ENCODE measurements at regions of chr4 and their contacts with region 1.

Region 1: GRCh38 chr4:75666299-75666698 is 6.9 kb downstream of the G3BP2 start:
- DNase-seq: no peak
- ATAC-seq: no peak
- H3K4me3 ChIP-seq: peak overlapping the region; percentile 15; the same call in 1 of the 2 replicates
- H3K27ac ChIP-seq: no peak overlapping the region
- H3K4me1 ChIP-seq: no peaks in the 10 kb centered on the region; the same call in 1 of the 2 replicates
- H3K27me3 ChIP-seq: no peaks in the 10 kb centered on the region
- CTCF ChIP-seq: no peak
- EP300 ChIP-seq: no peak
- POLR2A ChIP-seq: no peak
- RAD21 ChIP-seq: no peak

Region 2: DNA sequence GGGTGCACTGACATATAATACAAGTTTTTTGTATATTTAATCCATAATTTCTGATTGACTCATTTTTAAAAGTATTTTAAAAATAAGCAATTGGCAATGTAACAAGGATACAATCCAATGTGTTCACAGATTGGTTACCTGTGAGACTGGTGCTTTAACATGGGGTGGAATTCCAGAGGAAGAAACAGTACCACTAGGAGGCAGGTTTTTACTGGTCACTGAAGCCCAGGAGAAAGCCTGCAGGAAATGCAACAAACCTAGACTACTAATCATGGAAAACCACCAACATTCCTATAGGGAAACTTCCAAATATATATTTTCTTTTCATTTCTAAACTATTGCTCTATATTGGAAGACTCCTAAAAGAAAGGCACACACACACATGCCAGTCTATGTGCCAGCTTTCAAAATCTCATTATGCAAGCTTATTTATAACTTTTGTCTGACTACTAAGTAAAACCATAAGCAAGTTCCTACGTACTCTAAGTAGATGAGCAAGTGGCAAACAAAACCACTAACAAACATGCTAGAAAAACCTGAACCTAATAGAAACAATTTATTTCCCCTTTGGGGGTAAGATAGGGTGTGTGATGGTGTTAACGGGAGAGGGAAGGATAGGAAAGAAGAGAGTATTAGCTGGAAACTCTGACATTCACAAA is 12.3 kb before region 1 on chr4:
- CTCF ChIA-PET with region 1: interaction called, 28 read pairs
- POLR2A ChIA-PET with region 1: interaction called, 4 read pairs
- RAD21 ChIA-PET with region 1: no interaction called
- SMC1A ChIA-PET with region 1: interaction called, 13 read pairs
- in situ Hi-C with region 1: no loop called
- intact Hi-C with region 1: no loop called
- DNase-seq: no peak
- ATAC-seq: peak; percentile 37; the same call in 1 of the 3 replicates
- H3K4me3 ChIP-seq: no peak overlapping the region
- H3K27ac ChIP-seq: no peak overlapping the region
- H3K4me1 ChIP-seq: peaks cover 7% of the 10 kb centered on the region; the same call in 1 of the 2 replicates
- H3K27me3 ChIP-seq: no peaks in the 10 kb centered on the region
- CTCF ChIP-seq: peak; percentile 17 to 41 (median 24); a peak in 2 of 6 replicates
- EP300 ChIP-seq: no peak
- POLR2A ChIP-seq: no peak
- RAD21 ChIP-seq: no peak

Region 3: GRCh38 chr4:75737398-75737797 is 71.1 kb after region 1 on chr4:
- CTCF ChIA-PET with region 1: no interaction called
- POLR2A ChIA-PET with region 1: no interaction called
- RAD21 ChIA-PET with region 1: no interaction called
- SMC1A ChIA-PET with region 1: no interaction called
- in situ Hi-C with region 1: no loop called
- intact Hi-C with region 1: no loop called
- DNase-seq: no peak
- ATAC-seq: no peak
- H3K4me3 ChIP-seq: no peak overlapping the region
- H3K27ac ChIP-seq: no peak overlapping the region
- H3K4me1 ChIP-seq: peaks cover 7% of the 10 kb centered on the region
- H3K27me3 ChIP-seq: no peaks in the 10 kb centered on the region
- CTCF ChIP-seq: no peak
- EP300 ChIP-seq: no peak
- POLR2A ChIP-seq: no peak
- RAD21 ChIP-seq: no peak